Heart right ventricle (tissue), 16 donors: ENCODE measurements at regions of chr6 and their contacts with region 1.

Region 1: DNA sequence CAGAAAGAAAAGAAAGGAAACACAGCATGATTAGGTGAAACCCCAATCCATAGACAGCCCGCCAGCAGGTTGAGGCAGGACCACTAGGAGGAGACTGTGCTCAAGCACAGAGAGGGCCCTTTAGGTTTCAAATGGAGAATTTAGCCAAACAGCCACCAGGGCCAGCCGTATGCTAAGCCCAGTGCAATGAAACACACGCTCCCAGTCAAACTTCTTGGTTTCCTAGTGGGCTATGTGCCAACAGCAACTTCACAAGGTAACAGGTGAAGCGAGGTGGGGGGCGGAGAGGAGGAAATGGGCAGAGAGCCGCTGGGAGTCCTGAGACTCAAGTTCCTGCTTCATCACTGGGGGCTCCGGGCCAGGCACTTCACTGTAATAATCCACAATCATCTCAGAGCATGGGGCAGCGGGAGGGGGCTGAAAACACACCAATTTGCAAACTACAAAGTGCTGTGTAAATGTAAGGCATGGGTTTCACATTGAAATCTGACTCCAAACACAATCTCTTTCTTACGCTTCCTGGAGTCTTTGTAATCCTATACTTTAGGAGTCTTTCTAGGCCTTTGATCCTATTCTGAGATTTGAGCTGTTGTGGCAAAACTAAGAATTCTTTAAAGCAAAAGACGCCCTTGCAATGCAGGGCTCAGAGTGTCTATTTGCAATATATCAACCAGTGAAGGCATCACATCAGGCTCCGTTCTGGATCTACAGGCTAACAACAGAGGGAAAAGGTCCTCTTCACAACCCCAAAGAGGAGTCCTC is 117.3 kb downstream of the OPRM1 start:
- DNase-seq: peak in 1 of 2 donors; percentile 23
- ATAC-seq: peak in 7 of 8 donors; percentile 49 to 78 (median 65)
- H3K4me3 ChIP-seq: no peak overlapping the region
- H3K27ac ChIP-seq: peak overlapping the region in 1 of 10 donors; percentile 41
- H3K4me1 ChIP-seq: peaks cover 0 to 34% (median 0%) of the 10 kb centered on the region in 9 donors
- H3K27me3 ChIP-seq: no peaks in the 10 kb centered on the region
- CTCF ChIP-seq: peak; percentile 12 to 67 (median 46)

Region 2: DNA sequence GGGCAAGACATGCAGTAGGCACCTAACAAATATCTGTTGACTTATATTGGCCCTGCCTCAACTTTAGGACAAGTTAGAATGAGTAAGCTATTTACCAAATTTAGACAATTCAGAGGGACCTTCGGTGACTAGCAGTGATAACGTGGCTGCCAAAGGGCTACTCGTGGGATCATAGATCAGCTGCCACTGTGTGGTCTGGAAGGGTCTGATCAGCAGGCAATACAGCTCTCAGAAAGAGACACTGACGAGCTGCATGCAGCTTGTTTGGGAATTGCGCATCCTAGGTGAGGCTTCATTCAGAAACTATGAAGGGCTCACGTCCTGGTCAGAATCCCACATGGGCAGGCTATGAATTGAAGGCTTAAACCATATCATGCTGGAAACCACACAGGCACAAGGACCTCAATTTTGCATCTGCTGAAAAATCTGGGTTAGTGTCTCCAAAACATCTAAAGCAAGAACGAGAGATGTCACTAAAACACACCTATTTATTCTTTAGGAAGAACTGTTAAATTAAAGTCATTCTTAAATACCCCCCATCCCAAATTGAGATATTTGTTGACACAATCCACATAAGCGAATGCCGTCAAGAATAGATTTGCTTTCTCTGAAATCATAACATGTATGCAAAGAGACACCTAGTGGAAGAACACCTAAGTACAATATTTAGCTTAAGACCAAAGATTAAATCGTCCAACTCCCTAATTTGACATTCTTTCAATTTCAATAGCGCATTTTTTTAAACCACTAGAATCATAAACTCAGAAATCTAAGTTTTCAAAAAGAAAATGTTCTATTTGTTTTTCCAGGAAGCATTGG is 120.7 kb after region 1 on chr6:
- intact Hi-C with region 1: loop called (anchors 1 to 5 kb)
- DNase-seq: no peak
- ATAC-seq: peak in 2 of 8 donors; percentile 35 to 39
- H3K4me3 ChIP-seq: peak overlapping the region in 3 of 10 donors; percentile 1 to 10 (median 5)
- H3K27ac ChIP-seq: no peak overlapping the region
- H3K4me1 ChIP-seq: peaks cover 0 to 13% (median 3%) of the 10 kb centered on the region in 9 donors
- H3K27me3 ChIP-seq: no peaks in the 10 kb centered on the region
- CTCF ChIP-seq: peak in 8 of 9 donors; percentile 34 to 74 (median 64)

Region 3: DNA sequence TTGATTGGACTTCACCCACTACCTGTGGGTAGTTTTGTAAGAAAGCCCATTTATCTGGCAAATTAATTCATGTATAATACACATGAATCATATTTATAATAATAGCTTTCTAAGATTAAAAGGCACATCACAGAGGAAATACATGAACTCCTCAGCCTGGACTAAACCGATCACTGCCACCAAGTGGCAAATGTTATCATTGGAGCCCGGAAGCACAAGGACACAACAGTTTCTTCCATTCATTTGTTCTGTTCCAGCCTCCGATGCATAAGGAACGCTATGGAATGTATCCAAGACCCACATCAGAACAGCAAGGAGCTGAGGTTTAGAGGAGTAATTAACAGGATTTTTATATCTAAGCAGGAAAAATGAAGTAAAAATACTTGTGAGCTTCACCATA is 214.2 kb after region 1 on chr6:
- intact Hi-C with region 1: loop called (anchors 2 to 10 kb)
- DNase-seq: peak in 1 of 2 donors; percentile 13
- ATAC-seq: peak in 6 of 8 donors; percentile 51 to 75 (median 62)
- H3K4me3 ChIP-seq: no peak overlapping the region
- H3K27ac ChIP-seq: no peak overlapping the region
- H3K4me1 ChIP-seq: peaks cover 0 to 12% (median 0%) of the 10 kb centered on the region in 9 donors
- H3K27me3 ChIP-seq: no peaks in the 10 kb centered on the region
- CTCF ChIP-seq: peak in 7 of 9 donors; percentile 21 to 57 (median 53)

Region 4: GRCh38 chr6:154410619-154411072 is 254.3 kb after region 1 on chr6:
- intact Hi-C with region 1: loop called in 2 of 10 experiments (anchors 10 kb)
- DNase-seq: peak in 1 of 2 donors; percentile 60
- ATAC-seq: peak; percentile 85 to 96 (median 92)
- H3K4me3 ChIP-seq: no peak overlapping the region
- H3K27ac ChIP-seq: peak overlapping the region in 9 of 10 donors; percentile 61 to 92 (median 88)
- H3K4me1 ChIP-seq: peaks cover 7 to 45% (median 26%) of the 10 kb centered on the region in 9 donors
- H3K27me3 ChIP-seq: no peaks in the 10 kb centered on the region
- CTCF ChIP-seq: no peak

Region 5: DNA sequence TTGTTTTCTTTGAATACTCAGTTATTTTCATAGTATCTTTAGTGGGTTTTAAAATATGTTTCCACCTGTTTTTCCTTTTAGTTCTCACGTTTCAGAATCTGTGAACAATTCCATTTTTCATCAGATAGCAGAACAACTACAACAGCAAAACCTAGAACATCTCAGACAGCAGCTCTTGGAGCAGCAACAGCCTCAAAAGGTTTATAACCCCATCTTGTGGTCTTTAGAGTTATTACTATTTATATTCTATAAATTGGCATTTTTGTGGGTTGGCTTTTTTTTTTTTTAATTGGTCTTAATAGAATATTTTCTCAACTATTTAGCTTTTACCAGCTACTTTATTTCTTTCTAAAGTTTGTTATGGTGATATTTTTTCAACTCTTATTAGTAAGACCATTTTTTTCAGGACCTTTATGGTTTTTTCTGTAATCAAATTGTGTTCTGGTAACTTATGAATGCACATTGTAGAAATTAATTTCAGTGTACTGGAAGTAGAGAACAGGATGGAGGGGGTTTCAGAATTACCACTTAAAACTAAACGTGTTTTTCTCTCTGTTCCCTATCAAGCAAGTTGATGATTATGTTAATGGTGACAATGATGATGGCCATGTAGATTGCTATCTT is 649.1 kb after region 1 on chr6:
- intact Hi-C with region 1: loop called in 1 of 10 experiments (anchors 10 kb)
- DNase-seq: no peak
- ATAC-seq: peak in 2 of 8 donors; percentile 44 to 57
- H3K4me3 ChIP-seq: no peak overlapping the region
- H3K27ac ChIP-seq: no peak overlapping the region
- H3K4me1 ChIP-seq: peaks cover 0 to 7% (median 0%) of the 10 kb centered on the region in 9 donors
- H3K27me3 ChIP-seq: no peaks in the 10 kb centered on the region
- CTCF ChIP-seq: peak in 8 of 9 donors; percentile 22 to 75 (median 58)